Activated naive CD4-positive, alpha-beta T cell treated with anti-CD3 and anti-CD28 coated beads for 36 hours (primary cell): ENCODE measurements at regions of chr1 and their contacts with region 1.

Region 1: GRCh38 chr1:178749581-178750166 is 24.6 kb downstream of the RALGPS2 start:
- DNase-seq: no peak
- H3K4me3 Mint-ChIP-seq: no peak overlapping the region
- H3K27ac Mint-ChIP-seq: no peak overlapping the region
- H3K4me1 Mint-ChIP-seq: no peaks in the 10 kb centered on the region
- H3K27me3 Mint-ChIP-seq: no peaks in the 10 kb centered on the region

Region 2: DNA sequence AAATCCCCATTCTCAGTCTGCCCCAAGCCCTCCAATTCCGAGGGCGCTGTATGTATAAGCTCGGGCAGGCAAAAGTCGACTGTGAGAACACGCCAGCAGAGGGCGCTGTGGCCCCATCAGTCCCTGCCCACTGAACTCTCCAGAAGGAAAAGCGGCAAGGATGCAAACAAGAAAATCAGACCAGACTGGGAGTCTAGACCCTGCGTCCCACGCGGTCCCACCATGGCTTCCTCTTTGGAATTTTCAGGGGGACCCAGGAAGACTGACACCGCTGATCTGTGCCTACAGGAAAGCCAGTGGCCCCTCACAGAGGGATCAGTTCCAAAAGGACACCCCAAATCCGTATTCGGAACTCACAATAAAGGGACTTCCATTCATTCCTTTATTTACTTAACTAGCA is 217.3 kb before region 1 on chr1:
- CTCF ChIA-PET with region 1: interaction called, 17 read pairs
- intact Hi-C with region 1: loop called (anchors 1 kb)
- DNase-seq: peak; percentile 84
- H3K4me3 Mint-ChIP-seq: no peak overlapping the region
- H3K27ac Mint-ChIP-seq: no peak overlapping the region
- H3K4me1 Mint-ChIP-seq: no peaks in the 10 kb centered on the region
- H3K27me3 Mint-ChIP-seq: no peaks in the 10 kb centered on the region

Region 3: DNA sequence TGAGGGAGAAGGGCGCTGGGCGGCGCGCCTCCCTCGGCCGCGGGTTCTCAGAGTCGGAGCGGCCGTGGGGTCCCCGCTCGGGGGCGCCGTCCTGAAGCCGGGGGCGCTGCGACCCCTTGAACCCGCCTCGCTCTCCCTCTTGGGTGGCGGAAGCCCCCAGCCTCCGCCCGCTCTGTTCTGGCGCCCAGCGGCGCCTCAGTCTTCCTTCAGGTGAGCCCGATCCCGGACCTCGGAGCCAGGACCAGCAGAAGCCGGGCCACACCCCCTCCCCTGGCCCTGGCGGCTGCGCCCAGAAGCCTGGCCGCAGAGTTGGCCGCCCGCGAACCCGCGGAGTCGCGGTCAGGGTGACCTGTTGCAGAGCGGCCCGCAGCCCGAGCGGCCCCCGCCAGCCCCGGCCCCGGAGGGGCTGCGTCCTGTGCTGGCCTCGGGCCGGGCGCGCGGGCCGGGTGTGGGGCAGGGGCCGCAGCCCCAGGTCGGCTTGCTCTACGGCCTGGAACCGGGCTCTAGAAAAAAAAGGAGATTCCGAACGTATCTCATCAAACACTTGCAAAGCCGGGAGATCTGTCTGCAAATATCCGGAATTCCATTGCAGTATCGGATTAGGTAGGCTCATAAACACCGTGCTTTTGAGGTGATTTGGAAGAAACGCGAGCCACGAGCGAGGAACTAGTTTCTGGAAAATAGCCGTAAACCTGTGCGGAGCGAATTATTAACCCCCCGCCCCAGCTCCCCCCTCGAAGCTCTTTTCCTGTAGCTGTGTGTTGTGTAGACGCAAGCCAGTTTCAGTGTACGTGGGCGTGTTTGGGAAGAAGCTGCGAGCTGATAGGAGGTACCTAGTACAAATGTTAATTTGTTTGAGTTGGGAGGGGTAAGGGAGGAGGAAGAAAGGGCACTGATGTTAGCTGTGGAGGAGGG is 23.8 kb before region 1 on chr1:
- CTCF ChIA-PET with region 1: no interaction called
- intact Hi-C with region 1: loop called (anchors 2 kb)
- DNase-seq: peak; percentile 80
- H3K4me3 Mint-ChIP-seq: peak overlapping the region; percentile 73
- H3K27ac Mint-ChIP-seq: no peak overlapping the region
- H3K4me1 Mint-ChIP-seq: peaks cover 24% of the 10 kb centered on the region
- H3K27me3 Mint-ChIP-seq: no peaks in the 10 kb centered on the region